ENCODE measurements at regions of chr5 and their contacts with region 1.

Region 1: GRCh38 chr5:123450640-123451039 is 27.4 kb upstream of the CEP120 start:
- DNase-seq: no peak
- ATAC-seq: no peak
- H3K4me3 ChIP-seq: no peak overlapping the region
- H3K27ac ChIP-seq: peak overlapping the region; percentile 6; the same call in 1 of the 2 replicates
- H3K4me1 ChIP-seq: peaks cover 40% of the 10 kb centered on the region
- H3K27me3 ChIP-seq: no peaks in the 10 kb centered on the region
- CTCF ChIP-seq: no peak
- EP300 ChIP-seq: no peak
- POLR2A ChIP-seq: no peak
- RAD21 ChIP-seq: no peak

Region 2: DNA sequence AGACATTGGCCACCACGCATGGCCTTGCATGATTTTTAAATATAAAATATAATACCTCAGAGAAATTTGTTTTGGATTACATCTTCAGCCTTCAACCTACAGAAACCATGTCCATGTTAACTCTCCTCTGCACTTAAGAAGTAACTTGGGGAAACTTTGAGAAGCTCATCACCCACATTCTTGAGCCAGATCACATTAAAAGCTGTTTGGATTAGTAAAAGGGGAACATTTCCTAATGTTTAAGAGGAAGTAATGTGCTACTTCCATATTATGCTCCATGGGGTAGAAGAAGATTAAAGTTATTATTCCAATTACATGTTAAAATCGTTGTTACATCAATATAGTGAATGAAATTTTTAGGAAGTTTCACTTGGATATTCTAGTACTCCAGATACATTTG is 17.0 kb before region 1 on chr5:
- CTCF ChIA-PET with region 1: interaction called, 3 read pairs
- POLR2A ChIA-PET with region 1: interaction called, 11 read pairs
- RAD21 ChIA-PET with region 1: interaction called, 3 read pairs
- SMC1A ChIA-PET with region 1: interaction called, 3 read pairs
- in situ Hi-C with region 1: no loop called
- intact Hi-C with region 1: no loop called
- DNase-seq: no peak
- ATAC-seq: no peak
- H3K4me3 ChIP-seq: no peak overlapping the region
- H3K27ac ChIP-seq: no peak overlapping the region
- H3K4me1 ChIP-seq: peaks cover 6% of the 10 kb centered on the region
- H3K27me3 ChIP-seq: no peaks in the 10 kb centered on the region
- CTCF ChIP-seq: no peak
- EP300 ChIP-seq: no peak
- POLR2A ChIP-seq: no peak
- RAD21 ChIP-seq: no peak

Region 3: DNA sequence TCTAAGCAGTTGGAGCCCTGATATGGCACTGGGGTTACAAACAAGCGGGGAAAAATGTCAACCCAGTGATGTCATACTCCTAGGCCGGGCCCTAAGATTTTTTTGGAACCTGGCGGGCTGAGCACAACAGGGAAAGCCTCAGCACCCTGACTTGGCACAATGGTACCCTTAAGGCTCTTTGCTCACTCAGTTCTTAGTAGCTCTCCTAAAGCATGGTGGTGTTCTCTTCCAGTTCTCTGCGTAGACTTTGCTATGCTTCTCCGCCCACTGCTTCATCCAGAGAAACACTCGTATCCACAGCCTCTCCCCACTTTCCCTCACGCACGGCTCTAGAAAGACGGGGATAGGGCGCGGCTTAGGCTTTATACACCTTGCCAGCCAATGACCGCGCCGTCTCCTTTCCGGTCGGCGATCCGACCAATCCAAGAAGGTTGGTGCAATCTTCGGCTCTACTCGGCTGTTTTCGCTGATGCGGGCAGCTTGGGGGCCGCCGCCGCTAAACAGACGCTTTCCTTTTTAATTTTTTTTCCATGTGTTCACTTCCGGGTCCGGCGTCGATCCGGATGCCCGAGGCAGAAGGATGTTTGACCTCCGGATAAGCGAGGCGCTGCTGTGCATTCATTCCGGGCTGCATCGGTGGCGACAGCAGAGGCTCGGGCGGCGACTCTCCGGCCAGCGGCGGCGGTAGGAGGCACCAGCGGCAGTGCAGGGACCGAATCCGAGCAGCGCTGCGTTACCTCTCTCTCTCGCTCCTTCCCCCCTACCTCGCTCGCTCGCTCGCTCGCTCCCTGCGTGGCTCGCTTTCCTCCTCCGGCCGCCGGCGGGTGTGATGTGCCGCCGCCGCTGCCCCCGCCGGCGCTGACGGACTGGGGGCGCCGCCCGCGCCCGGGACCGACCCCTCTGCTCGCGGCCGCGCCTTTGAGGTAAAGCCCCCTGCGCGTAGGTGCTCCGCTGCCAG is 61.3 kb after region 1 on chr5 and contains the start of gene CSNK1G3:
- CTCF ChIA-PET with region 1: no interaction called
- POLR2A ChIA-PET with region 1: interaction called, 3 read pairs
- RAD21 ChIA-PET with region 1: interaction called, 4 read pairs
- SMC1A ChIA-PET with region 1: interaction called, 11 read pairs
- in situ Hi-C with region 1: loop called (anchors 10 kb)
- intact Hi-C with region 1: loop called (anchors 2 kb)
- DNase-seq: peak; percentile 82
- ATAC-seq: peak; percentile 95
- H3K4me3 ChIP-seq: peak within 1 kb of the TSS; percentile 82
- H3K27ac ChIP-seq: peak within 1 kb of the TSS; percentile 83
- H3K4me1 ChIP-seq: peaks cover 9% of the 10 kb centered on the region
- H3K27me3 ChIP-seq: no peaks in the 10 kb centered on the region
- CTCF ChIP-seq: peak in 1 of 3 experiments; percentile 19; a peak in 2 of 6 replicates
- EP300 ChIP-seq: no peak
- POLR2A ChIP-seq: peak; percentile 96
- RAD21 ChIP-seq: no peak
- polyA plus RNA-seq, gene CSNK1G3: 7.4 to 7.8 TPM

Region 4: DNA sequence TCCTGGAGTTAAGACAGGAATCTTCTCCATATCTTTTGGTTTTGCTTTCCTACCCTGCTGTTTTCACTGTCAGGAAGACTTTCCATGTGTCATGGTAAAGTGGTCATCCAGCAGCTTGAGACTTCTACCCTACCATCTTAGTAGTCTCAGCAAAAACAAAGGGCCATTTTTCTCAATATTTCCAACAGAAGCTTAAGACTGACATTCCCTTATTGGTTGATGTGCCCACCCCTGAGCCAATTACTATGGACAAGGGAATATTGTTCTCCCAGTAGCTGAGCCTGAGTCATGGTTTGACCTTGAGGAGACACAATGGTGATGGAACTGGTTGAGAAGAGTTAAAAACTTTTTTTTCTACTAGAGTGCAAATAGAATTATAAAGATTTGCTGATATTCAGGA is 166.9 kb after region 1 on chr5:
- CTCF ChIA-PET with region 1: no interaction called
- POLR2A ChIA-PET with region 1: no interaction called
- RAD21 ChIA-PET with region 1: no interaction called
- SMC1A ChIA-PET with region 1: no interaction called
- in situ Hi-C with region 1: no loop called
- intact Hi-C with region 1: no loop called
- DNase-seq: no peak
- ATAC-seq: no peak
- H3K4me3 ChIP-seq: no peak overlapping the region
- H3K27ac ChIP-seq: no peak overlapping the region
- H3K4me1 ChIP-seq: no peaks in the 10 kb centered on the region
- H3K27me3 ChIP-seq: no peaks in the 10 kb centered on the region
- CTCF ChIP-seq: no peak
- EP300 ChIP-seq: no peak
- POLR2A ChIP-seq: no peak
- RAD21 ChIP-seq: no peak

Region 5: GRCh38 chr5:124102486-124102885 is 651.8 kb after region 1 on chr5:
- CTCF ChIA-PET with region 1: no interaction called
- POLR2A ChIA-PET with region 1: no interaction called
- RAD21 ChIA-PET with region 1: no interaction called
- SMC1A ChIA-PET with region 1: no interaction called
- in situ Hi-C with region 1: no loop called
- intact Hi-C with region 1: no loop called
- DNase-seq: no peak
- ATAC-seq: no peak
- H3K4me3 ChIP-seq: no peak overlapping the region
- H3K27ac ChIP-seq: no peak overlapping the region
- H3K4me1 ChIP-seq: no peaks in the 10 kb centered on the region
- H3K27me3 ChIP-seq: no peaks in the 10 kb centered on the region; a peak in 1 of 4 replicates
- CTCF ChIP-seq: no peak
- EP300 ChIP-seq: no peak
- POLR2A ChIP-seq: no peak
- RAD21 ChIP-seq: no peak

Measured in GM12878 (cell line).